Dendritic cell treated with granulocyte-macrophage colony-stimulating factor and Interleukin-4, amounts not matched to agents 40 ng/mL and 50 ng/mL, for 4 days (primary cell): ENCODE measurements at regions of chr2 and their contacts with region 1.

Region 1: DNA sequence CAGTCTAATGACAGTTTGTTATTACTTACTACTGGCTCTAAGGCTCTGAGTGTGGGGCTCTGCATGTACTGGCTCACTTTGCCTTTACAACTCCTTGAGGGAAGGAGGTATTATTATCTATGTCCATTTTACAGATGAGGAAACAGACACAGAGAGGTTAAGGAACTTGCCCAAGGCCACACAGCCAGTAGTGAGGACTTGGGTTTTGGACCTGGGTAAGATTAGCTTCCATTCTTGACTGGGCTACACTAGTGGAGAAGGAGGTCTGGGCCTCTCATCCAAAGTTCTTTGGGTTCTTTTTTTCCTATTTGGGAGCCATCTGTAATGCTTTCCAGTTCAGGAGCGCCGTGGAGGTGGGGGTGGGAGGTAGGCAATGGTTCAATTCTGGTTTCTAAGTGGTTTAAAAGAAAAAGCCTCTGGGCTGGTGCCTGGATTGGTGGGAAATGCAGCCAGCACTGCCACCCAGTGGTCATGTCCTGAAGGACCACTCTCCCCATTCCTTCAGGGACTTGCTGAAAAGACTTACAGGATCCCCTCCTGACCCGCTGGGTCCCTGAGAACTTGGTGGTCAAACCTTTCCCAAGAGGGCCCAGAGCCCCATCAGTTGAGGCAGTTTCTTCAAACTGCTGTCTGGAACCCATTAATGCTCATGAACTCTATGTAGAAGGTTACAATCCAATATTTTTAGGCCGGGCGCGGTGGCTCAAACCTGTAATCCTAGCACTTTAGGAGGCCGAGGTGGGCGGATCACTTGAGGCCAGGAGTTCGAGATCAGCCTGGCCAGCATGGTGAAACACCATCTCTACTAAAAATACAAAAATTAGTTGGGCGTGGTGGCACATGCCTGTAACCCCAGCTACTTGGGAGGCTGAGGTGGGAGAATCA is 38.6 kb upstream of the NOTO start:
- H3K4me3 Mint-ChIP-seq: no peak overlapping the region
- H3K27ac Mint-ChIP-seq: no peak overlapping the region
- H3K4me1 Mint-ChIP-seq: no peaks in the 10 kb centered on the region
- H3K27me3 Mint-ChIP-seq: peaks cover 27% of the 10 kb centered on the region

Region 2: DNA sequence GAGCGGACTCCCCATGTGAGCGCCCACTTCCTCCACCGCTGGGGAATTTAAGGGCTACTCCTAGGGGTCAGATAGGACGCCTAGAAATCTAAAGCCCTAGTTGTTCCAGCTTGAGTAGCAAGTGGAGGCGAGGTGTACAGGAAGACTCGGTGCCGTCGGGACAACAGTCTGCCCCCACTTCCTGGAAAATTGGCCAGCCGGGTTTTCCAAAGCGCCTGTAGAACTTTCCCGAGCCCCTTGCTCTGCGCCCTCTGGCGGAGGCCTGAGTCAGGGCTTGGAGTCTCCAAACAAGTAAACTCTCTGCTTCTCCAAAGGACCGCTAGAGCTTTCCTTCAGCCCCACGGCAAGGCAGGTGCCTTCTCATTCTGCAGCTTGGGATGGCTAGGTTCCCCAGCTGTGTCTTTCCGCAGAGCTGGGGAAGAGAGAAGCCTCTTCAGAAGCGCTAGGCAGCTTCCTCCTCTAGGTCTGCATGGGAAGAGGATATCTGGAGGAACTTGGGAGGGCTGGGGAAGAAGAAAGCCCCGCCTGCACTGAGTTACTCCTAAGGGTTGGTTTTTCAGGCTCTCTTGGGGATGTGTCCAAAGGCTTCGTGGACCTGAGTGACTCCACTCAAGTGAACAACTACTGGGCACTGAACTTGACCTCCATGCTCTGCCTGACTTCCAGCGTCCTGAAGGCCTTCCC is 275.8 kb before region 1 on chr2:
- intact Hi-C with region 1: loop called (anchors 2 kb)
- H3K4me3 Mint-ChIP-seq: peak overlapping the region; percentile 73
- H3K27ac Mint-ChIP-seq: peak overlapping the region; percentile 22
- H3K4me1 Mint-ChIP-seq: peaks cover 55% of the 10 kb centered on the region
- H3K27me3 Mint-ChIP-seq: peaks cover 52% of the 10 kb centered on the region

Region 3: GRCh38 chr2:72993147-72993932 is 170.4 kb before region 1 on chr2:
- intact Hi-C with region 1: loop called (anchors 5 kb)
- H3K4me3 Mint-ChIP-seq: no peak overlapping the region
- H3K27ac Mint-ChIP-seq: no peak overlapping the region
- H3K4me1 Mint-ChIP-seq: no peaks in the 10 kb centered on the region
- H3K27me3 Mint-ChIP-seq: no peaks in the 10 kb centered on the region

Region 4: GRCh38 chr2:73085691-73086360 is 77.9 kb before region 1 on chr2:
- intact Hi-C with region 1: loop called (anchors 1 kb)
- H3K4me3 Mint-ChIP-seq: no peak overlapping the region
- H3K27ac Mint-ChIP-seq: no peak overlapping the region
- H3K4me1 Mint-ChIP-seq: no peaks in the 10 kb centered on the region
- H3K27me3 Mint-ChIP-seq: peaks cover 8% of the 10 kb centered on the region

Region 5: DNA sequence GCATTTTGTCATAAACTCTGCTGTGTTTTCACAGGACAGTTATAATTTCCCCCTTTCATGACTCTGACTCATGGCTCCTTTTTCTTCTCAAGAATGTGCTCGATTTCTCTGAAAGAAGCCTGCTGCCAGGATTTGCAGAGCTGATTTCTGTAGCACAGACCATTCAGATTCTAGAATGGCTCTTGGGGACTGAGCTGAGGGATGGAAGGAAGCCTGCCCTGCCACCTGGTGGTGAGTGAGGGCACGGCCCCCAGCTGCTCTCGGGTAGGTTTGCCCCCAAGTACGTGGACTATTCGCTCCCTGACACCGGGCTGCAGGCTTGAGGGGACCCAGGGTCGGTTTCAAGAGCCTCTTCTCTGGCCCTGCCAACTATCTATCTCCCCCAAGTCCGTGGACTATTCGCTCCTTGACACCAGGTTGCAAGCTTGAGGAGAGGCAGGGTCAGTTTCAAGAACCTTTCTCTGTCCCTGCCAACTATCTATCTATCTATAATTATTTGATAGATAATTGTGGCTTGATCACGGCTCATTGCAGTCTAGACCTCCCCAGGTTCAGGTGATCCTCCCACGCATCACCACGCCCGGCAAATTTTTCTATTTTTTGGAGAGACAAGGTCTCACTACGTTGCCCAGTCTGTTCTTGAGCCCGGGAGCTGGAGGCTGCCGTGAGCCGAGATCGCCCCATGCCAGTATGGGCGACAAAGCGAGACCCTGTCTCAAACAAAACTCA is 48.9 kb after region 1 on chr2:
- intact Hi-C with region 1: no loop called
- H3K4me3 Mint-ChIP-seq: no peak overlapping the region
- H3K27ac Mint-ChIP-seq: no peak overlapping the region
- H3K4me1 Mint-ChIP-seq: peaks cover 26% of the 10 kb centered on the region
- H3K27me3 Mint-ChIP-seq: peaks cover 8% of the 10 kb centered on the region